WTC11 (cell line): ENCODE measurements at regions of chr1 and their contacts with region 1.

Region 1: GRCh38 chr1:42173155-42173933 is 8.8 kb upstream of the GUCA2A start:
- DNase-seq: peak; percentile 82
- ATAC-seq: peak; percentile 83
- H3K4me3 Mint-ChIP-seq: no peak overlapping the region
- H3K27ac Mint-ChIP-seq: no peak overlapping the region
- H3K4me1 Mint-ChIP-seq: peaks cover 10% of the 10 kb centered on the region
- H3K27me3 Mint-ChIP-seq: no peaks in the 10 kb centered on the region
- CTCF ChIP-seq: peak; percentile 96

Region 2: DNA sequence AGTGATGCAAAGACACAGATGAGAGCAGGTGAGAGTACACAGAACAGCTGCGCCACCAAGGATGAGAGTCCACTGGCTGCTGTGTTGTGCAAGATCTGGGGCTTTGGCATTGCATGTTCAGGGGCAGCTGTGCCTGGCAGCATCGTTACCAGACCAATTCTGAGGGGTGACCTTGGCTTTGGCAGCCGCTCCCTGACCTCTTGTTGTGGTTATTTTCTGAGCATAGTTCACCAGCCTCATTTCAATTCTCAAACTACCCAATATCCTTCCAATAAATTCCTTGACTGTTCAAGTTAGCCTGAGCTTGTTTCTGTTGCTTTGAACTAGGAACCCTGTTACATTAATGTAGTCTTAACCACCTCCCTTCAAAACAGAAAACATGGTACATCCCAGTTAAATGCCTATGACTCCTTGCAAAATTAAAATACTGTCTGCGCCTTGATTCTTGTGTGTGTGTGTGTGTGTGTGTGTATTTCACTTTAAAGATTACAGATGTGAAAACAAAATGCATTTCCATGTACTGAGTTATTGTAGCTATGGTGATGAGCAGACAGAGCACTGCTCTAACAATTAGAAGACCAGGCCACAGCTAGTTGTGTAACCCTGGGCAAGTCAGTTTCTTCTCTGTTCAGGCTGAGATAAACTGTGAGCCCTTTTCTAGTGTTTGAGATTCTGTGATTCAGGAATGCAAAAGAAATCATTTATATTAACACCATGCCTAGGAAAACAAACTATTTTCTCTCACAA is 126.4 kb before region 1 on chr1:
- CTCF ChIA-PET with region 1: no interaction called
- POLR2A ChIA-PET with region 1: no interaction called
- DNase-seq: no peak
- ATAC-seq: no peak
- H3K4me3 Mint-ChIP-seq: no peak overlapping the region
- H3K27ac Mint-ChIP-seq: no peak overlapping the region
- H3K4me1 Mint-ChIP-seq: peaks cover 7% of the 10 kb centered on the region
- H3K27me3 Mint-ChIP-seq: no peaks in the 10 kb centered on the region; the same call in 1 of the 2 replicates
- CTCF ChIP-seq: no peak

Region 3: GRCh38 chr1:42157667-42158066 is 15.7 kb before region 1 on chr1:
- CTCF ChIA-PET with region 1: interaction called, 38 read pairs
- POLR2A ChIA-PET with region 1: no interaction called
- DNase-seq: no peak
- ATAC-seq: peak; percentile 90
- H3K4me3 Mint-ChIP-seq: no peak overlapping the region
- H3K27ac Mint-ChIP-seq: no peak overlapping the region
- H3K4me1 Mint-ChIP-seq: no peaks in the 10 kb centered on the region
- H3K27me3 Mint-ChIP-seq: no peaks in the 10 kb centered on the region; the same call in 1 of the 2 replicates
- CTCF ChIP-seq: no peak

Region 4: DNA sequence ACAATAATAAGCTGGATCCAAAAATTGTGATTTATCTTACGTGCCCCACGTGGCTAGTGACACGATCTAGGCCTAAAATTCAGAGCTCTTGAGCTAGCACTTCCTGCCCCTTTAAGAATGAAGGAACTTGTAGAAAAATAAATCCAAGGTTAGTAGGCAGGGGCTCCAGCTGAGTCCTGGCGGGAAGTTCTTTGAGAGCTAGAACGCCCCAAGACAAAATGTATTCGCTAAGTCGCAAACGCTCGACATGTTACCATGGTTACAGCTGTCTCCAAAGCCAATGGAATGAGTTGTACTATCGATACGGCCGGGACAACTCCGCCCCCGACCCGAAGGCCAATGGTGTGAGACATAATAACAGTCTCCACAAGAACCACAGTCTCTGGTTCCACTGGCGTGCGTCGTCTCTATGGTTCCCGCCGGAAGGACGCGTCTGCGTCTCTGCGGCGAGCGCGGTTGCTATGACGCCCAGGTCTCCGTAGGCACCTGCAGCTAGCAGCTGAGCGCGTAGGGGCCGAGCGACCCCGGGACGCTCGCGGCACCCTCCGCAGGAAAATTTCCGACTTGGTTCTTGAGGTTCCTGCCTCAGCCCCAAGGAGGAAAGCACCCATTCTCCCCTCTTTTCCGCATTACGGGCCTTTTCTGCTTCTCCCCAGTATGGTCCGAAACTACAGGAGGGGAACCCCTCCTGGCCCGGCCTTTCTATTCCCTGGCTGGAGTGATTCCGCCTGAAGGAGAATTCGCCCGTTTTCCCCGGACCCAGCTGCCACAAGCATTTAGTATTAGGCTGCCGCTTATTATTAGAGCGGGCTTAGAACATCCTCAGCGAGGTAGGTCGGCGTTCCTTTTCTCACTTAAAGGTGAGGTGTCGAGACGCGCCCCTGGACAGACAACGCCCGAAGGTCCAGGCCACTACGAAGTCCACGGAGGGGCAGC is 289.8 kb after region 1 on chr1 and contains the start of gene CCDC30:
- CTCF ChIA-PET with region 1: interaction called, 10 read pairs
- POLR2A ChIA-PET with region 1: no interaction called
- DNase-seq: peak; percentile 97
- ATAC-seq: peak; percentile 99
- H3K4me3 Mint-ChIP-seq: peak within 1 kb of the TSS; percentile 84
- H3K27ac Mint-ChIP-seq: peak within 1 kb of the TSS; percentile 76
- H3K4me1 Mint-ChIP-seq: peaks cover 16% of the 10 kb centered on the region
- H3K27me3 Mint-ChIP-seq: peaks cover 19% of the 10 kb centered on the region
- CTCF ChIP-seq: no peak
- total RNA-seq, gene CCDC30: 0.71 to 2.1 TPM (median 0.92 TPM) in 3 replicates